Heart right ventricle (tissue), 16 donors: ENCODE measurements at regions of chr10 and their contacts with region 1.

Region 1: DNA sequence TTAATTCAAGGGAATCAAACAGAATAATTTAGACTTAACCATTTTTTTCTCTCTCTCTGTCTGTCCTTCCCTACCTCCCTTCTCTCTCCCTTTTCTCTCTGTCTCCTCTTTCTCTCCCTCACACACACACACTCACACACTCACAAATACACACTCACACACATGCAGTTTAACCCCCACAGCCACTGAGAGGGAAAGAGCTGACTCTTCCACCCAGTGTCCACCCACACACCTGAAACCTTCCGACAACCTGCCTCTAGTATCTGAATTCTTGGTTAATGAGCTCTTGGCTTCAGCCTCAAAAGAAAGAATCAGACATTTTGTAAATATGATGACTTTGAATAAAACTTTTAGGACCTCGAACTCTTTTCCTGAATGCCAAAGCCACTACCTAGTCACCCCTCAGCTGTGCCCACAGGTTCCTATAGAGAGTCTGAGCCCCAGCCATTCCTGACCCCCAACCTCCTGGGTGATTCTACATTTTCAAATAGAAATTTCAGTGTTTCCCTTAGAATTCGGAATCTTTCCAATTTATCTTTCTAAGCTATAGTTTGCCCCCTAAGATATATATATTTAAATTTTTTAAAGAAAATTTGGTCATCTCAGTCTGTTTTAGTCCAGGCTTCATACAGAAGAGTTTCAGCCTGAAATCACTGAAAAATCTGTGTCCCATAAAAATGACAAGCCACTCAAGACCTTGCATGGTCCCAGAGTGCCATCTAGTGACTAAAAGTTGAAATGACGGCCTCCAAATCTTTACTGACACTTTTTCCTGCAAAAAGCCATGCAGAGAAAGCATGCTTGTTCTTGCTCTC is 202.8 kb downstream of the IPMK start:
- DNase-seq: peak in 1 of 2 donors; percentile 13
- ATAC-seq: no peak
- H3K4me3 ChIP-seq: no peak overlapping the region
- H3K27ac ChIP-seq: no peak overlapping the region
- H3K4me1 ChIP-seq: no peaks in the 10 kb centered on the region
- H3K27me3 ChIP-seq: no peaks in the 10 kb centered on the region
- CTCF ChIP-seq: peak; percentile 50 to 83 (median 67)

Region 2: GRCh38 chr10:57338823-57339558 is 725.9 kb before region 1 on chr10:
- intact Hi-C with region 1: loop called in 8 of 10 experiments (anchors 5 to 10 kb)
- DNase-seq: no peak
- ATAC-seq: no peak
- H3K4me3 ChIP-seq: no peak overlapping the region
- H3K27ac ChIP-seq: no peak overlapping the region
- H3K4me1 ChIP-seq: no peaks in the 10 kb centered on the region
- H3K27me3 ChIP-seq: no peaks in the 10 kb centered on the region
- CTCF ChIP-seq: peak; percentile 45 to 76 (median 65)

Region 3: GRCh38 chr10:57579926-57580325 is 485.0 kb before region 1 on chr10:
- intact Hi-C with region 1: loop called (anchors 2 to 10 kb)
- DNase-seq: peak in 1 of 2 donors; percentile 15
- ATAC-seq: peak in 3 of 8 donors; percentile 44 to 71 (median 46)
- H3K4me3 ChIP-seq: no peak overlapping the region
- H3K27ac ChIP-seq: no peak overlapping the region
- H3K4me1 ChIP-seq: no peaks in the 10 kb centered on the region
- H3K27me3 ChIP-seq: no peaks in the 10 kb centered on the region
- CTCF ChIP-seq: peak in 8 of 9 donors; percentile 12 to 61 (median 47)

Region 4: DNA sequence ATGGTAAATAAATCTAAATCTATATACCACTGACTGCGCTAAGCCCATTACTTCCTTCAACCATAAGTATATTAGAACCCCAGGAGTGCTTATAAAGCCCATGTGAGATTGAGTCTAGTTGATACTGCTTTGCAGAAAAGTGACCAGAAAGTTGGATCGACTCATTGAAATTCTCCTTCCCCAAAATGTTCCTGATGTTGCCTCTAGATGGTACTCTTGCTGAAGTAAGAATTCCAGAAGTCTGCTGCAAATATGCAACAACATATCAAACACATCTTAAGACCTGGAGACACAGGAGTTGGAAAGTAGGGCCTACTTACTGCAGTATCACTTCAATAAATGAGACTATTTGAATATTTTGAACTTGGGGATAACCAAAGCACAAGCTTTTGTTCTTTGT is 348.0 kb before region 1 on chr10:
- intact Hi-C with region 1: loop called in 3 of 10 experiments (anchors 5 to 10 kb)
- DNase-seq: no peak
- ATAC-seq: no peak
- H3K4me3 ChIP-seq: no peak overlapping the region
- H3K27ac ChIP-seq: no peak overlapping the region
- H3K4me1 ChIP-seq: no peaks in the 10 kb centered on the region
- H3K27me3 ChIP-seq: no peaks in the 10 kb centered on the region
- CTCF ChIP-seq: peak in 7 of 9 donors; percentile 22 to 55 (median 42)

Region 5: DNA sequence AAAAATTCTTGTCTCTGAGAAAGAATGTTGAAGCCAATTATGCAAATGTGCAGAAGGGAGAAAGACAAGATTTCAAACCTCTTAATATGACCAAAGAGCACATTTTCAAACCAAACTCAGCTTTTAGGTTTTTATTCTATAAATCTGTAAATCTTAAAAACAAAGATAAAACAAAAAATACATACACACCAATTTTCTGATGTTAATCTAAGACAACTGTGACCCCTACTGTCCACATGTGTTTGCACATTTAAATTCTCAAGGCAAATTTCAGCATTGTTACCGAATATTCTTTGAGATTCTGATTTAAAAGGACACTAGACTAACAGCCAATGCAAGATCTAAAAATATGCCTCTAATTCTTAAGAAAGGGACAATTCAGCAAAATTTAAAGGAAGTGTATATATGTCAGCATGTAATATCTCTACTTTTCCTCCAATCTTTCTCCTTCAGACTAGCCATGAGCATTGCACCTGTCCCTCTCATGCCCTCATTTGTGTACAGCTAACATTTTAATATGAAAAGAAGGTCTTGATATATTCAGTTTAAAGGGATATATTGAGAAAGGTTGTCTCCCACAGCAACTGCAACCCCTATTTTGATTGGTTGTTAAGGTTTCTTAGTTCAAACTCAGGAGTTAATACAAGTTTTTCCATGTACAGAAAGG is 215.1 kb before region 1 on chr10:
- intact Hi-C with region 1: loop called in 2 of 10 experiments (anchors 5 to 10 kb)
- DNase-seq: no peak
- ATAC-seq: no peak
- H3K4me3 ChIP-seq: no peak overlapping the region
- H3K27ac ChIP-seq: no peak overlapping the region
- H3K4me1 ChIP-seq: peaks cover 0 to 20% (median 5%) of the 10 kb centered on the region in 9 donors
- H3K27me3 ChIP-seq: no peaks in the 10 kb centered on the region
- CTCF ChIP-seq: peak in 6 of 9 donors; percentile 34 to 60 (median 54)